ENCODE measurements at regions of chr1 and their contacts with region 1.

Region 1: DNA sequence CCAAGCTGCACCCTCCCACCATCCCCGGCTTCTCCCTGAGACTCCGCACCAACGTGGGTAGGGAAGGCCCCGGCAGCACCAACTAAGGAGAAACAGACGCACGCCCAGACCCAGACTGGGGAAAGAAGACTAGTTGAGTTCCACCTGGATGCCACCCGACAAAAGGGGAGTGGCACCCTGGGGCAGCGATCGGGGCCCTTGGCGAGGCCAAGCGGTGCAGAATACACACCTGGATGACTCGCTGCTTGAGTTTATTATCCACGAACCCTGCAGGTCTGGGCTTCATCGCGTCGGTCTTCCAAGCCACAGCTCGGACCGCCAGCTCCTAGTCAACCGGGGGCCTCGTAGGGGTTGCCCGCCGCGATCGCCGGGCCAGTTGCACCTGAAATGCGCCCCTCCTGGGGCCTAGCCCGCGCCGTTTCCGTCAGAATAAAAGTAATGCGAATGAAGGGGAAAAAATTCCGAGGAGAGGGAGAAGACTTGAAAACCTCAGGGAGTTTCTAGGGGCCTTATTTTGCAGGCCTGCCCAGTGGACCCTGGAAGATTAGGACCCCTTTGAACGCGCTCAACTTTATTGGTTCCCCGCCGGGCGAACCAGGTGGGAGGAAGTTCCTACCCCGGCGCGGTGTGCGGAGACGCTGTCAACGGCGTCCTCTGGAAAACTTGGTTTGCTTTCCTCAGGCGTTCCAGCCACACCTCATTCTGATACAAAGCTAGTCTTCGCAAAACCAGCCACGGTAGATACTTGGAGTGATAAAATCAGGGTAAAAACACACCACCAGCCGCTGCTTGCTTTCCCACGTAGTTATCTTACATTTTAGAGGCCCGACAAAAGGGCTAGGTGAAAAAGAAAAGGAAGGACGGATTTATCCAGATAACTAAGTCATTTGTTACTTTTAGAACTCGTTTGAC is at the start of gene NVL:
- DNase-seq: peak; percentile 77 to 97 (median 84)

Region 2: GRCh38 chr1:223695941-223696340 is 634.2 kb before region 1 on chr1:
- intact Hi-C with region 1: loop called (anchors 5 kb)
- DNase-seq: no peak

Region 3: GRCh38 chr1:223811634-223812415 is 518.3 kb before region 1 on chr1:
- intact Hi-C with region 1: loop called (anchors 5 kb)
- DNase-seq: no peak

Region 4: DNA sequence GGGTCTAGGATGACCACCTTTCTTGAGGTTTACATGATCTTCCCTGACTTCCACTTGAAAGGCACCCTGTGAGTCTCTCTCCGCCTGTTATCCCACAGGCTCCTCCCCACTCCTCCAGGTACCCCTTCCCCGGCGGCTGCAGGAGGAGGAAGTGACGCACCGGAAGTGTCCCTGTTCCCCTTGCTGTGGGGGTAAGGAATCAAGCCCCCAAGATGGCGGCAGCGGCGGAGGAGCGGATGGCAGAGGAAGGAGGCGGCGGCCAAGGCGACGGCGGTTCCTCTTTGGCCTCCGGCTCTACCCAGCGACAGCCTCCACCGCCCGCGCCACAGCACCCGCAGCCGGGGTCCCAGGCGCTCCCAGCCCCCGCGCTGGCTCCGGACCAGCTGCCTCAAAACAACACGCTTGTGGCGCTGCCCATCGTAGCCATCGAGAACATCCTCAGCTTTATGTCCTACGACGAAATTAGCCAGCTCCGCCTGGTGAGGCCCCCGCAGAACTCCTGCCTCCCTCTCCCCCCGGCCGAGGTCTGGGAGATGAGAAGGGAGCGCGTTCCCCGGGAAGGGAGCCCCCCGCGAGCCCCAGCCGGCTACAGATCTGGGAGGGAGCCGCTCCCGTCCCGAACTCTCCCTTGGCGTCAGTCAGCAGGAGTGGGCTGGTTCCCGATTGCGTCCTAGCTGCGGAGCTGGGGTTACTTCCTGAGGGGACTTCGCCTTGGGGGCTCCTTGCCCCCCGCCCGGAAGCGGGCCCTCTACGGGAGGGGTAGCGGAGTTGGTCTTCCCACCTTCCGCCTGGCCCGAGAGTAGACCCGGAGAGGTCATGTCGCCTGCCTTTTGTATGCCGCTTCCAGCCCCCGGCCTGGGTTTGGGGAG is 215.9 kb before region 1 on chr1 and contains the start of gene FBXO28:
- intact Hi-C with region 1: loop called (anchors 1 kb)
- DNase-seq: peak; percentile 95 to 99 (median 98)

Region 5: DNA sequence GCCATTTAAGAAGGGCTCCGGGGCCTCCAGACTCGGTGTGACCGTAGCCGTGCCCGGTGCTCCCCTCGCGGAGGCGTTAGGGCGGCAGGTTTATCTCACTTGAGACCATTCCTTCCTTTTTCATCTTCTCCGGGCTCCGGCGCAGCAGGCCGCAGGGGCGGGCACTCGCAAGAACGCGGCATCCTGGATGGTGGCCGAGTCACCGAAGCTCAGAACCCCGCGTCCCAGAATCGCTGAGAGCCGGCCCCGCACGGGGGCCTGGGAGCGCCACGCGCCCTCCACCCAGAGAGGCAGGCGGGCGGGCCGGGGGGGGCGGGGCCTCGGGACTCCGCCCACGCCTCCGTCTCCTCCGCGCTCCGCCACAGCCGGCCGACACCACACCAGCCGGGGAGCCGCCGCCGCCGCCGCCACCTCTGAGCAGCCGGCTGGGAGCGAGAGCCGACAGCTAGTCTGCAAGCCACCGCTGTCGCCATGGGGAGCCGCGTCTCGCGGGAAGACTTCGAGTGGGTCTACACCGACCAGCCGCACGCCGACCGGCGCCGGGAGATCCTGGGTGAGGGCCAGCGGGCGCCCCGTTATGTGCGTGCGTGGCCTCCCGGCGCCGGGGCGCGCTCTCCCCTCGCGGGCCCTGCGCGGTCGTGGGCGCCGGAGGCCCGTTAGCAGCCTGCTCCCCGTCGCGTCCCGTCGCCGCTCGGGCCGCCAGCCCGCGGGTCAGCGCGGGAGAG is 147.1 kb before region 1 on chr1 and contains the start of gene DEGS1:
- intact Hi-C with region 1: loop called (anchors 2 kb)
- DNase-seq: peak; percentile 73 to 97 (median 82)

Region 6: DNA sequence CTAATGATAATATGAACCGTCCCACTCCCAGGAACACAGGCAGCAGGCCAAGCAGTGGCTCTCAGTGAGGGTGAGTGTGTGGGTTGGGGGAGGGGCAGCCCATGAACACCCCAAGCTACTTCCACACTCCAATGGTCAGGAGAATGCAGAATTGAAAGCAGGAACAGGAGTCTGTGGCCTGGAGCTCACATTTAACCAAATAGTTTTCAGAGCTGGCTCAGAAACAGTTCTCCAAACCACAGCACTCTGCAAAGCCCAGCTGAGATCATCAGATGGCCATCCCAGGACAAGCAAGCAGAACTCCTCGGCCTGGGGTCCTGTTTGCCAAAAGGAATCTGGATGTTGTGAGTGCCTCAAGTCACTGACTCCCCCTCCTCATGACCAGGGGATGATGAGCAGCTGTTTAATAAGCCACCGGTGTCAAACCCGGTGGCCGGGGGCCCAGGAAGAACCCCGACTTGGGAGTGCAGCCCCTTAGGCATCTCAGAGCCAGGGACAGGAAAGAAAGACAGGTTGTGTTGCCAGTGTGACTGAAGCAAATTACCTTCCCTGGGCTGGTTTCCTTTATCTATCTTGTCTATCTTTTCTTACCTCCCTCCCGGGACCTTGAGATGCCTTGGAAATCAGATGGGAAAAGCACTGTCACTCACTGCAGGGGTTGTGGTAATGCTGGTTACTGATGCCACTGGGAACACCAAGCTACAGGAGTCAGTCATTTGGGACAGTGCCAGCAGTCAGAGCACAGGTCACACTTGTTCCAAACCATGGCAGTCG is 126.7 kb before region 1 on chr1:
- intact Hi-C with region 1: no loop called
- DNase-seq: peak in 4 of 10 donors; percentile 17 to 29 (median 22)

Region 7: DNA sequence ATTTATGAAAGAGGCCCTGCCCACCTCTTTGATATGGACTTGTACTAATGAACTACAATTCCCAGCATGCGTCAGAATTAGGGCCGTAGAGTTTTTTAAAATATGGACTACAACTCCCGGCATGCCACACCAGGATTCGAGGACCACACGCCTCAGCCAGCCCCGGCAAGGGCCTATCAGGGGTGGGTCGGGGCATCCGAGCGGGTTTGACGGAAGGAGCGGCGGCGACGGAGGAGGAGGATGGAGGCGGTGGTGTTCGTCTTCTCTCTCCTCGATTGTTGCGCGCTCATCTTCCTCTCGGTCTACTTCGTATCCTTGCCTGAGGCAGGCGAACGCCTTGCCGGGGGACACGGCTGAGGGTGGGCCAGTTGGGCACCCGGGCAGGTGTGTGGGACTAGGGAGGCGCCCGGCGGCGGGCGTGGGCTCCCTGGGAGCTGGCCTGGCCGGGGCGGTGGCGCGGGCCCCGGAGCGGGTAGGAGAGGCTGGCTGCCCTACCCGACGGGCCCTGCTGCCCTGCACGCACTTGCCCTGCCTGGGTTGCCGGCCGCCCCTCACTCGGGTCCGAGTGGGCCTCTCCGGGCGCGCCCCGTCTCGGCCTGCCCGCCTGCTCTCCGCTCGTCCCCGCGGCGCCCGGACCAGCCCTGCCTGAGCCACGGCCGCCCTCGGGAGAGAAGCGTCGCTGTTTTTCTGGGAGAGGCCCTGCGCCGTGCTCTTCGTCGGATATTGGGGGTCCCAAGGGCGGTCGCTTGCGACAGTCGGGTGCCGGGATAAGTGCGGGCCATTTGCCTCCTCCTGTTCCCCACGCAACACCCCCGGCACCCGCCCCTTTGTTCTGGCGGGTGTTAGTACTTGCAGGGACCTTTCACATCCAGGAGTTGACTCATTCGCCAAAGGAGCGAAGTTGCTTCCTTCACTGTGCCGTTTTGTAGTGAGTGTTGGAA is 26.9 kb after region 1 on chr1 and contains the start of gene CNIH4:
- intact Hi-C with region 1: loop called (anchors 2 kb)
- DNase-seq: peak; percentile 81 to 98 (median 91)

Region 8: GRCh38 chr1:224472806-224473205 is 142.7 kb after region 1 on chr1:
- intact Hi-C with region 1: no loop called
- DNase-seq: no peak

Measured in posterior cingulate gyrus (tissue), 11 donors.